Activated CD8-positive, alpha-beta memory T cell treated with anti-CD3 and anti-CD28 coated beads, Interleukin-2, amount 10 ng/mL, durations not matched to agents 7 days and 5 days (primary cell): ENCODE measurements at regions of chr20 and their contacts with region 1.

Region 1: GRCh38 chr20:31842471-31843157 is 2.8 kb downstream of the FOXS1 start:
- DNase-seq: no peak
- ATAC-seq: no peak
- H3K4me3 Mint-ChIP-seq: no peak overlapping the region
- H3K27ac Mint-ChIP-seq: no peak overlapping the region
- H3K4me1 Mint-ChIP-seq: no peaks in the 10 kb centered on the region
- H3K27me3 Mint-ChIP-seq: peaks cover 6% of the 10 kb centered on the region

Region 2: DNA sequence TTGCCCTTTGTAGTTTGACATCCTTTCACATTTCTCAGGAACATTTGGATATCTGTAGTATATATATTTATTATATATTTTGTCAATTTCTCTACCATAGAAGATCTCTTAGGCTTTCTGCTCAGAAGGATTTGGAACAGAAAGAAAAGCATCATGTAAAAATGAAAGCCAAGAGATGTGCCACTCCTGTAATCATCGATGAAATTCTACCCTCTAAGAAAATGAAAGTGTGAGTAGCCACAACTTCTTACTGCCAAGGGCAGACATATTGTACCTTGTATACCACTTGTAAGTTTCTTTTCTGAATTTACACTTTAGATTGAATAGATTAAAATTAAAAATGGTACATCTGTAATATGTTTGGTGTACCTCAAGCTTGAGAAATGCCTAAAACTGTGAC is 72.4 kb before region 1 on chr20:
- CTCF ChIA-PET with region 1: no interaction called
- DNase-seq: no peak
- ATAC-seq: no peak
- H3K4me3 Mint-ChIP-seq: no peak overlapping the region
- H3K27ac Mint-ChIP-seq: peak overlapping the region; percentile 49
- H3K4me1 Mint-ChIP-seq: peaks cover 16% of the 10 kb centered on the region
- H3K27me3 Mint-ChIP-seq: no peaks in the 10 kb centered on the region

Region 3: GRCh38 chr20:31861346-31862156 is 18.9 kb after region 1 on chr20:
- CTCF ChIA-PET with region 1: interaction called, 16 read pairs
- DNase-seq: peak; percentile 80
- ATAC-seq: peak; percentile 94
- H3K4me3 Mint-ChIP-seq: peak overlapping the region; percentile 4
- H3K27ac Mint-ChIP-seq: no peak overlapping the region
- H3K4me1 Mint-ChIP-seq: peaks cover 8% of the 10 kb centered on the region
- H3K27me3 Mint-ChIP-seq: peaks cover 34% of the 10 kb centered on the region

Region 4: GRCh38 chr20:32231847-32232246 is 389.2 kb after region 1 on chr20:
- CTCF ChIA-PET with region 1: no interaction called
- DNase-seq: peak; percentile 67
- ATAC-seq: peak; percentile 92
- H3K4me3 Mint-ChIP-seq: no peak overlapping the region
- H3K27ac Mint-ChIP-seq: peak overlapping the region; percentile 90
- H3K4me1 Mint-ChIP-seq: peaks cover 22% of the 10 kb centered on the region
- H3K27me3 Mint-ChIP-seq: no peaks in the 10 kb centered on the region